Mammary epithelial cell (primary cell): ENCODE measurements at regions of chr5 and their contacts with region 1.

Region 1: DNA sequence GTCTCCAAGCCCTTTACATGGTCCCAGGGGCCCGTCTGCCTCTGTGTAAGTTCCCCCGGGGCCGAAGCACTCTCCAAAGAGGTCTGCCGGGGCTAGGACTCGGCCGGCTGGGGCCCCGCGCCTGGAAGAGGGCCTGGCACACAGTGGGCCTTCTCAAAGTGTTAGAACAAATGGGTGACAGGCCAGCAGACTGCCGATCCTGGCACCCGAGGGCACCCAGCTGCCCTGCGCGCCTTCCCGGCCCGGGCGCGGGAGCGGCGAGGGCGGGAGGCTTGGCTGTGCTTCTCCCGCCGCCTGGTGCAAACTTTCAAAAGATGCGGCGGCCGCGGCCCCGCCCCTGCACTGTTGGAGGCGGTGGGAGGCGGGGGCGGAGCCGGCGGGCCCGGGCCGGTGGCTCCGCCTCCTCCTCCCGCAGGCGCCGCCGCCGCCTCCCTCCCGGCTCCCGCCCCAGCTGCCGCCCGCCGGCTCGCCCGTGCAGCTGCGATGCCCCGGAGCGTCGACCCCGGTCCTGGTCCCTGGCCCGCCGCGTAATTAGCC is at the start of gene NEURL1B:
- DNase-seq: peak; percentile 66
- H3K4me3 ChIP-seq: peak within 1 kb of the TSS; percentile 45 to 62 (median 57)
- H3K27ac ChIP-seq: peak within 1 kb of the TSS; percentile 8
- H3K4me1 ChIP-seq: peaks cover 27% of the 10 kb centered on the region
- H3K27me3 ChIP-seq: no peaks in the 10 kb centered on the region
- CTCF ChIP-seq: peak in 1 of 2 donors; percentile 19
- total RNA-seq, gene NEURL1B: 0.50 to 2.9 TPM

Region 2: GRCh38 chr5:172559004-172559932 is 81.6 kb before region 1 on chr5:
- CTCF ChIA-PET with region 1: no interaction called
- dilution Hi-C with region 1: no loop called
- in situ Hi-C with region 1: no loop called
- intact Hi-C with region 1: loop called (anchors 1 kb)
- DNase-seq: peak; percentile 98
- H3K4me3 ChIP-seq: peak overlapping the region in 2 of 3 experiments; percentile 17 to 28
- H3K27ac ChIP-seq: peak overlapping the region; percentile 51
- H3K4me1 ChIP-seq: peaks cover 25% of the 10 kb centered on the region
- H3K27me3 ChIP-seq: peaks cover 2% of the 10 kb centered on the region
- CTCF ChIP-seq: no peak